Dorsolateral prefrontal cortex (tissue), 120 donors: ENCODE measurements at regions of chr12 and their contacts with region 1.

Region 1: DNA sequence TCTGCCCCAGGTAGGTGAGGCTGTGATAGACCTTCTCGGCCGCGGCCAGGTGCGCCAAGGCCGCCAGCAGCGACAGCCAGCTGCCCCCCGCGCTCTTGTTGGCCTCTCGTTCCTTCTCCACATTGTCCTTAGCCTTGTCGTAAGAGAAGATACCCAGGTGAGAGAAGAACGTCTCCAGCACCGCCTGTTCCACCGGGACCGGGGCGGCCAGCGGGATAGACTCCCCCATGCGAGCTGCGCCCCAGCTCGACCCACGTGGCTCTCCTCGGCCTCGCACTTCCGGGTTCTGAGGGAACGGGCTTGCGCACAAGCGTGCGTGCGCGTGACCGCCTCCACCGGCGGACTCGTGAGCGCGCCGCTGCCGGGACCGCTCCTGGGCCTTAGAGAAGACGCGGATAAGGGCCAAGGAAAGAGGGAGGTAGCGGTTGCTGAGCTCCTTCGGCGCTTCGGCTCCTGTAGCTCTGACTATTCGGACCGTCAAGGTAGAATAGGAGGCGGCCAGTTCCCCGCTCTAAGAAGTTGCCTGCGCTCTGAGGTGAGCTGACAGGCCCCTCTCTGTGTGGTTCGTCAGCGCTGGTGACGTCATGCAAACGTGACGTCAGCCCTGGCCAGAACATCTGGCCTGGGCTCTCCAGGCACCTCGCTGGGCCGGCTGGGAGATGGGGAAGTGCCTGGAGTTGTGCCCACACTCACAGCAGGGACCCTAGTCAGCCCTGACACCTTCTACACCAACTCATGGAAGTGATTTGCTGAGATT is at the start of gene KICS2:
- DNase-seq: peak; percentile 82 to 94 (median 91)
- H3K4me3 ChIP-seq: peak within 1 kb of the TSS; percentile 69 to 99 (median 89)
- H3K27ac ChIP-seq: peak within 1 kb of the TSS; percentile 81 to 99 (median 96)
- H3K27me3 ChIP-seq: no peaks in the 10 kb centered on the region
- CTCF ChIP-seq: peak in 36 of 56 donors; percentile 5 to 59 (median 30)
- total RNA-seq, gene KICS2: 9.5 to 27.3 (median 14.3) TPM

Region 2: DNA sequence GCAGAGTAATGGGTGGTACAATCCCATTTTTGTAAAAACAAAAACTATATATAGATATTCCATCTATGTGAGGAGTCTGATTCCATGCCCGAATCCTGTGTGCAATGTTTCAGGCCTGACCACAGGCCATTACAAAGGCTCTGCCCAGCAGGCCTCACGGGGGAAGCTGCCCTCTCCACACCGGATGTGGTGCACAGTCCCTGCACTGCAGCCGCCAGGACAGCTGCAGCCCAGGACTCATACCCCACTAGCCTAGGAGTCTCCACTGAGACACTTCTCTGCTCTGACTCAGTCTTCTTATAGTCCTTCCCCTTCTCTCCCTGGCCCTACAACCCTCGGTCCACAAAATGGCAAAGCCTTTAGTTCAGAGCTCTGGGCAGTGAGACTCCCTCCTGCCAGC is 1477.6 kb before region 1 on chr12:
- intact Hi-C with region 1: loop called in 1 of 2 experiments (anchors 10 kb)
- DNase-seq: no peak
- H3K4me3 ChIP-seq: no peak overlapping the region
- H3K27ac ChIP-seq: peak overlapping the region in 2 of 59 donors; percentile 8 to 11
- H3K27me3 ChIP-seq: no peaks in the 10 kb centered on the region
- CTCF ChIP-seq: no peak

Region 3: DNA sequence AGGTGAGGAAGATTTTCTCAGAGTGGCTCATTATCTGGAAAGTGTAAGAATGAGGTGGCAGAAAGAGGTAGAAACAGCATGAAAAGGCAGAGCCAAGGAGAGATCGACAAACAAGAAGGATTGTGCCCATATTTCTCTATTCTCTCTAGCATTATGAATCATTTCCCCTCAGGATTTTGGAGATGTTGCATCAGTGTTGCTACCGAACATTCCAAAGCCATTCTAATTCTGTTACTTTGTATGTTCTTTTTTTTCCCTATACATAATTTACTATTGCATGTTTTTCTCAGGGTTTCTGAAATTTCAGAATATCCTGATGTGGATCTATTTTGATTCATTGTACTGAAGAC is 61.5 kb before region 1 on chr12:
- intact Hi-C with region 1: no loop called
- DNase-seq: no peak
- H3K4me3 ChIP-seq: no peak overlapping the region
- H3K27ac ChIP-seq: no peak overlapping the region
- H3K27me3 ChIP-seq: no peaks in the 10 kb centered on the region
- CTCF ChIP-seq: no peak

Region 4: GRCh38 chr12:64181504-64182291 is 40.5 kb before region 1 on chr12:
- intact Hi-C with region 1: loop called in 1 of 2 experiments (anchors 5 kb)
- DNase-seq: peak in 9 of 10 donors; percentile 5 to 72 (median 49)
- H3K4me3 ChIP-seq: peak overlapping the region in 1 of 59 donors; percentile 1
- H3K27ac ChIP-seq: peak overlapping the region in 14 of 59 donors; percentile 7 to 54 (median 30)
- H3K27me3 ChIP-seq: no peaks in the 10 kb centered on the region
- CTCF ChIP-seq: peak; percentile 45 to 87 (median 75)

Region 5: GRCh38 chr12:64256166-64256800 is 34.1 kb after region 1 on chr12:
- intact Hi-C with region 1: loop called in 1 of 2 experiments (anchors 5 kb)
- DNase-seq: no peak
- H3K4me3 ChIP-seq: peak overlapping the region in 24 of 59 donors; percentile 1 to 44 (median 23)
- H3K27ac ChIP-seq: peak overlapping the region in 47 of 59 donors; percentile 4 to 88 (median 65)
- H3K27me3 ChIP-seq: no peaks in the 10 kb centered on the region
- CTCF ChIP-seq: peak; percentile 66 to 96 (median 82)